Dorsolateral prefrontal cortex (tissue), 120 donors: ENCODE measurements at regions of chr2 and their contacts with region 1.

Region 1: GRCh38 chr2:179751163-179751809 is 110.1 kb downstream of the ZNF385B start:
- DNase-seq: no peak
- H3K4me3 ChIP-seq: no peak overlapping the region
- H3K27ac ChIP-seq: no peak overlapping the region
- H3K27me3 ChIP-seq: no peaks in the 10 kb centered on the region
- CTCF ChIP-seq: peak; percentile 57 to 86 (median 71)

Region 2: GRCh38 chr2:178796079-178796677 is 955.1 kb before region 1 on chr2:
- intact Hi-C with region 1: loop called in 1 of 2 experiments (anchors 5 kb)
- DNase-seq: no peak
- H3K4me3 ChIP-seq: no peak overlapping the region
- H3K27ac ChIP-seq: no peak overlapping the region
- H3K27me3 ChIP-seq: peaks cover 0 to 2% (median 0%) of the 10 kb centered on the region in 45 donors
- CTCF ChIP-seq: peak; percentile 65 to 91 (median 76)

Region 3: DNA sequence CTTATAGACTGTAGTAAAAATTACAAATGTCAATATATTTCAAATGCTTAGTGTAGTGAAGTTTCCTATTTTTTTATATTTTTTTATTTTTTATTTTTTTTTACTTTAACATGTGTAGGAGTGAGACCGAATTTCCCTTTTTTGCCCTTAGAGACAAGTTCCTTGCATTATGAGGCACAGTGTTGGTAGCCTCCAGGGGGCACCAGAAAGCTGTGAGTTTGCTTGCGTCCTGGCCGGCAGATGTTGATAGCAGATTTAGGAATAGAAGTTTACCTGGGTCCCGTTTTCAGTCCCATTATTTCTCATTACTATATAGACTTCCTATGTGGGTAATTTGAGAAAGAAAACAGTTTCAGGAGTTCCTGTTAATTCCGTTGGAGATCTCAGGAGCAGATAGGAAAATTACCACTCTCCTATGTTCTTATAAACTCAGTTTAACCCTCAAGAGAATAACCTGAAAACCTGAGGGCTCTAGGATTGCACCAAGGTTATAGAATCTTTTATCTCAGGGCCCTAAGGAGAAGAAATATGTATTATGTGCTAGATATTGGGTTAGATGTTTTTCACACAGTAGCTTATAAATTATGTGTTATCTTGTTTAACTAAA is 329.1 kb before region 1 on chr2:
- intact Hi-C with region 1: loop called (anchors 5 kb)
- DNase-seq: peak in 9 of 10 donors; percentile 49 to 79 (median 70)
- H3K4me3 ChIP-seq: no peak overlapping the region
- H3K27ac ChIP-seq: no peak overlapping the region
- H3K27me3 ChIP-seq: no peaks in the 10 kb centered on the region
- CTCF ChIP-seq: peak; percentile 35 to 84 (median 73)

Region 4: GRCh38 chr2:179428649-179429048 is 322.6 kb before region 1 on chr2:
- intact Hi-C with region 1: loop called (anchors 5 kb)
- DNase-seq: peak in 1 of 10 donors; percentile 15
- H3K4me3 ChIP-seq: peak overlapping the region in 53 of 59 donors; percentile 0 to 55 (median 32)
- H3K27ac ChIP-seq: peak overlapping the region in 19 of 59 donors; percentile 4 to 62 (median 22)
- H3K27me3 ChIP-seq: no peaks in the 10 kb centered on the region
- CTCF ChIP-seq: no peak